ENCODE measurements at regions of chr12 and their contacts with region 1.

Region 1: DNA sequence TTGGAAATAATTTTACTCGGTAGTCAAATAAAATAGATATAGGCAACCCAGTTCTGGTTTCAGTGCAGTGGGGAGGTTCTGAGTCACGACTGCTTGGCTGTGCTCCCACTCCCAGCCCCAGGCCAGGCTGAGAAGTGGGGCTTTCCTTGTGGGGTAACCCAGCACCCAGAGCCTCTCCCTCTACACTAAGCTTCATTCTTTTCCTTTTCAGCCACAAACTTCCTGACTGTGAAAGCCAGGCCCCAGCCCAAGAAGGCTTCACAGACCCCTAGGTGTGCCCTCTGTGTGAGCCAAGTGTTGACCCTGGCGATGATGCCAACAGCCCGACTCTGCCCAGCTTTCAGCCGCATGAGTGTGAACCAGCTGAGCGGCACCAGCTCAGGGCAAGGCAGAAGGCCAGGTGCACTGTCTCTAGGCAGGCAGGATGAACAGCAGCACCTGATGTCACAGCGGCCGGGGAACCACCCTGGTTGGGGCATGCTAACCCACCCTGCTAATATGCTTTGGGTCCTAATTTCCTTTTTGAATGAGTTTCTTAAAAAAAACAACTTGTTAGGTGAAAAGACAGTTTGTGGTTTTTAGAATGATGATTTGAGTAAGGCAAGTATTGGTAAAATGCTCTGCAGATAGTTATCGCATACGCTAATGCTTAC is 42.2 kb upstream of the ATP23 start:
- DNase-seq: no peak
- H3K4me3 ChIP-seq: no peak overlapping the region
- H3K27ac ChIP-seq: no peak overlapping the region
- H3K4me1 ChIP-seq: peaks cover 9 to 20% (median 13%) of the 10 kb centered on the region in 4 experiments
- H3K27me3 ChIP-seq: peaks cover 0 to 10% (median 8%) of the 10 kb centered on the region in 4 experiments; a peak in 4 of 7 replicates
- CTCF ChIP-seq: no peak
- EP300 ChIP-seq: no peak
- POLR2A ChIP-seq: no peak
- RAD21 ChIP-seq: no peak

Region 2: GRCh38 chr12:57571926-57572762 is 327.0 kb before region 1 on chr12:
- CTCF ChIA-PET with region 1: no interaction called
- POLR2A ChIA-PET with region 1: no interaction called
- DNase-seq: no peak
- H3K4me3 ChIP-seq: no peak overlapping the region
- H3K27ac ChIP-seq: no peak overlapping the region
- H3K4me1 ChIP-seq: no peaks in the 10 kb centered on the region
- H3K27me3 ChIP-seq: no peaks in the 10 kb centered on the region
- CTCF ChIP-seq: no peak
- EP300 ChIP-seq: no peak
- POLR2A ChIP-seq: no peak
- RAD21 ChIP-seq: no peak

Region 3: DNA sequence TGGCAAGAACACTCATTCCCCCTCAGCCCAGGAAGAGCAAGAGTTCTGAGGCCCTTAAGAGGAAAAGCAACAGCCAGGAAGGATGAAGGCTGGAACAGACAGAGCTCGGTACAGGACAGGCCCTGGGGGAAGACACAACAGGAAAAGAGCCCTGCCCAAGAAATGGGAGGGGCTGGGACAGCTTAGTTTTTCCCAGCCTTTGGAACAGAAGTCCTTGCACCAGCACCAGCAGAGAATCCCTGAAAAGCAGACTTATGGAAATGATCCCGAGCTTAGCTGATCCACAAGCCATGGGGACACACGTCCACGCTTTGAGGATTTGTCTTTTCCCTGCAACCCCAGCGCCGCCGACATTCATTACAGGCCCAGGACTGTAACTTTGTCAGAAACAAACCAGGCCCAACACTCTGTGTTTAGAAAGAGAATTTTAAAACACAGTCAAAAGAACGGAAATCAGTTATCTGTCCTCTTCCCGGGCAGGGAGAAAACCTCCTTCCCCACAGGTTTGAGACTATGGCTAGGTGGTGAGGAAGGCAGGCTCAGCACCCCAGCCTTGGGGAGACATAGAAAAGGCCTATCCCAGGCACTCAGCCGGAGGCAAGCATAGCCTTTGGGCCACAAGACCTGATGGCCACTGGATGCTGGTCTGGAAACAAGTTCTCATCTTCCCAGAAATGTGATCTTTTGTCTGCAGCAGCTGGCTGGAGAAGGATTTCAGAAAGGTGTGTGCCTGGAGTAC is 76.6 kb before region 1 on chr12:
- CTCF ChIA-PET with region 1: interaction called, 105 read pairs
- POLR2A ChIA-PET with region 1: interaction called, 4 read pairs
- DNase-seq: no peak
- H3K4me3 ChIP-seq: no peak overlapping the region
- H3K27ac ChIP-seq: no peak overlapping the region
- H3K4me1 ChIP-seq: no peaks in the 10 kb centered on the region
- H3K27me3 ChIP-seq: no peaks in the 10 kb centered on the region
- CTCF ChIP-seq: no peak
- EP300 ChIP-seq: no peak
- POLR2A ChIP-seq: no peak
- RAD21 ChIP-seq: no peak

Region 4: DNA sequence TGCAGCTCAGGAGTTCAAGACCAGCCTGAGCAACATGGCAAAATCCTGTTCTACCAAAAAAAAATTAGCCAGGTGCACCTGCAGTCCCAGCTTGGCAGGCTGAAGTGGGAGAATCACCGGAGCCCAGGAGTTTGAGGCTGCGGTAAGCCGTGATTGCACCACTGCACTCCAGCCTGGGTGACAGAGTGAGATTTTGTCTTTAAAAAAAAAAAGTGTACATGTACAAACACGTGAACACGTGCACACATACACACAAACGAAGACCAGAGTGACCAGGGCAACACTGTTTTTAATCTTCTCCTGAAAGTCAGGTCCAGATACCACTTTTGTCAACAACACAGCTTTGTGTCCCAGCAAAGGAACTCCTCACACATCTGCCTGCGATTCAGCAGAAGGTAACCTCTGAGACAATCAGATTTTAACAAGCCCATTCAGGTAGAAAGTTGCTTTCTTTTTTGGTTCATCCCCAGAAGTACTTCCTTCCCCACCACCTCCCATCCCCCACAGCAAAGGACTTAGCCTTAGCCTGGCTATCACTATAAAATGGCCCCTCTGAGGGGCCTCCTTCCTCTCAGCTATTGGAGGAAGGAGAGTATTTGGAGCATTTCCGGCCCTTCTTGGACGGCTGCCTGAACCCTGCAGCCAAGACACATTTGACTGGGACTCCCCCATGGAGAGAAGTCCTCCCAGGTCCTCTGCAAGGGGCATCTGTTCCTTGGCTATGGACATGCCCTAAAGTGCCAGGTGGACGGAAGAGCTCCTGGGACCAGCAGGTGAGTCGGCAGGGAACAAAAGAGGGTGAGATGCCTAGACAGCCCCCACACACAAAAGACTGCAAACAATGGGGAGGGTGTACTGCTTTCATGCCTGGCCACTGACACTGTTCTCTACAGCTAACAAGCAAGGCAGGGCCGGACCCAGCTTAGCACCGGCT is 62.4 kb before region 1 on chr12:
- CTCF ChIA-PET with region 1: interaction called, 181 read pairs
- POLR2A ChIA-PET with region 1: interaction called, 181 read pairs
- DNase-seq: no peak
- H3K4me3 ChIP-seq: peak overlapping the region in 3 of 4 experiments; percentile 0 to 31 (median 14); a peak in 3 of 8 replicates
- H3K27ac ChIP-seq: peak overlapping the region; percentile 55; the same call in 1 of the 2 replicates
- H3K4me1 ChIP-seq: peaks cover 37 to 69% (median 45%) of the 10 kb centered on the region in 4 experiments
- H3K27me3 ChIP-seq: no peaks in the 10 kb centered on the region
- CTCF ChIP-seq: no peak
- EP300 ChIP-seq: peak in 1 of 2 experiments; percentile 30; a peak in 1 of 3 replicates
- POLR2A ChIP-seq: no peak; a peak in 1 of 3 replicates
- RAD21 ChIP-seq: no peak

Region 5: GRCh38 chr12:57865090-57865751 is 33.9 kb before region 1 on chr12:
- CTCF ChIA-PET with region 1: interaction called, 36 read pairs
- POLR2A ChIA-PET with region 1: interaction called, 10 read pairs
- DNase-seq: peak in 1 of 2 experiments; percentile 73
- H3K4me3 ChIP-seq: peak overlapping the region; percentile 25 to 65 (median 41)
- H3K27ac ChIP-seq: no peak overlapping the region
- H3K4me1 ChIP-seq: peaks cover 0 to 12% (median 8%) of the 10 kb centered on the region in 4 experiments; a peak in 5 of 7 replicates
- H3K27me3 ChIP-seq: peaks cover 0 to 20% (median 10%) of the 10 kb centered on the region in 4 experiments; a peak in 5 of 7 replicates
- CTCF ChIP-seq: no peak
- EP300 ChIP-seq: no peak
- POLR2A ChIP-seq: peak in 1 of 2 experiments; percentile 55; a peak in 1 of 3 replicates
- RAD21 ChIP-seq: no peak

Region 6: GRCh38 chr12:57888409-57889157 is 10.6 kb before region 1 on chr12:
- CTCF ChIA-PET with region 1: interaction called, 75 read pairs
- POLR2A ChIA-PET with region 1: interaction called, 19 read pairs
- DNase-seq: no peak
- H3K4me3 ChIP-seq: peak overlapping the region in 3 of 4 experiments; percentile 4 to 23 (median 19); a peak in 3 of 8 replicates
- H3K27ac ChIP-seq: peak overlapping the region; percentile 4; the same call in 1 of the 2 replicates
- H3K4me1 ChIP-seq: peaks cover 2 to 22% (median 17%) of the 10 kb centered on the region in 4 experiments
- H3K27me3 ChIP-seq: no peaks in the 10 kb centered on the region; a peak in 1 of 7 replicates
- CTCF ChIP-seq: no peak
- EP300 ChIP-seq: no peak
- POLR2A ChIP-seq: peak in 1 of 2 experiments; percentile 59; a peak in 2 of 3 replicates
- RAD21 ChIP-seq: no peak

Measured in H1 (cell line).